Pancreas (tissue), 10 donors: ENCODE measurements at regions of chr10 and their contacts with region 1.

Region 1: DNA sequence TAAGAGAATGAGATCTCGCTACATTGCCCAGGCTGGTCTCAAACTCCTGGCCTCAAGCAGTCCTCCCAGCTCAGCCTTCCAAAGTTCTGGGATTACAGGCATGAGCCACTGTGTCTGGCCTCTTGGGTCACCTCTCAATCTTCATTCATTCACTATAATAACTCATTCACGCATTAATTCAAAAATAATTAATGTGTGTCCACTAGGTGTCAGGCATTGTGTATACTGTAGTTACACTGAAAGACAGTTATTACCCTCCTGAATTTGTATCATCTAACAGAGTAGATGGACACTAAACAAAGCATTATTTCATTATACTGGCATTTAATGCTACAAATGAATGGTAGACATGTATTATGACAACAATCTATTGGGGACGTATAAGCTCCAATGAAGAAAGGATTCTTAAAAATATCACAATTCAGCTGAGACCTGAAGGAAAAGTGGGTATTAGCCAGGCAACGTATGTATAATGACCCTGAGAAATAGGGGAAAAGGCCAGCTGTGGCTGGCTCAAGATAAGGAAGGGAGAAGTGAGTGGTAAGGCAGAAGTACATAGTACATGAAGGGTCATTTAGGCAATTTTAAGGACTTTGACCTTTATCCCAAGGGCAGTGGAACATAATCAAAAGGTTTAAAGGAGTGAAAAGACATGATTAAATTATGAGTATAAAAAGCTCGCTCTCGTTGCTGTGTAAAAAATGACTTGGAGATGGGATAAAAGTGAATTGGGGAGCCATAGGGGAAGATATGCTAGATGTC is 150.7 kb downstream of the BTAF1 start:
- DNase-seq: no peak
- ATAC-seq: peak in 3 of 4 donors; percentile 47 to 69 (median 59)
- H3K4me3 ChIP-seq: no peak overlapping the region
- H3K27ac ChIP-seq: peak overlapping the region in 1 of 4 donors; percentile 1
- H3K4me1 ChIP-seq: peaks cover 0 to 14% (median 5%) of the 10 kb centered on the region in 3 donors
- H3K27me3 ChIP-seq: no peaks in the 10 kb centered on the region
- CTCF ChIP-seq: no peak

Region 2: GRCh38 chr10:92432596-92432995 is 358.3 kb after region 1 on chr10:
- intact Hi-C with region 1: loop called in 1 of 3 experiments (anchors 10 kb)
- DNase-seq: no peak
- ATAC-seq: no peak
- H3K4me3 ChIP-seq: no peak overlapping the region
- H3K27ac ChIP-seq: no peak overlapping the region
- H3K4me1 ChIP-seq: no peaks in the 10 kb centered on the region
- H3K27me3 ChIP-seq: no peaks in the 10 kb centered on the region
- CTCF ChIP-seq: no peak